PC-9 (cell line): ENCODE measurements at regions of chr7 and their contacts with region 1.

Region 1: DNA sequence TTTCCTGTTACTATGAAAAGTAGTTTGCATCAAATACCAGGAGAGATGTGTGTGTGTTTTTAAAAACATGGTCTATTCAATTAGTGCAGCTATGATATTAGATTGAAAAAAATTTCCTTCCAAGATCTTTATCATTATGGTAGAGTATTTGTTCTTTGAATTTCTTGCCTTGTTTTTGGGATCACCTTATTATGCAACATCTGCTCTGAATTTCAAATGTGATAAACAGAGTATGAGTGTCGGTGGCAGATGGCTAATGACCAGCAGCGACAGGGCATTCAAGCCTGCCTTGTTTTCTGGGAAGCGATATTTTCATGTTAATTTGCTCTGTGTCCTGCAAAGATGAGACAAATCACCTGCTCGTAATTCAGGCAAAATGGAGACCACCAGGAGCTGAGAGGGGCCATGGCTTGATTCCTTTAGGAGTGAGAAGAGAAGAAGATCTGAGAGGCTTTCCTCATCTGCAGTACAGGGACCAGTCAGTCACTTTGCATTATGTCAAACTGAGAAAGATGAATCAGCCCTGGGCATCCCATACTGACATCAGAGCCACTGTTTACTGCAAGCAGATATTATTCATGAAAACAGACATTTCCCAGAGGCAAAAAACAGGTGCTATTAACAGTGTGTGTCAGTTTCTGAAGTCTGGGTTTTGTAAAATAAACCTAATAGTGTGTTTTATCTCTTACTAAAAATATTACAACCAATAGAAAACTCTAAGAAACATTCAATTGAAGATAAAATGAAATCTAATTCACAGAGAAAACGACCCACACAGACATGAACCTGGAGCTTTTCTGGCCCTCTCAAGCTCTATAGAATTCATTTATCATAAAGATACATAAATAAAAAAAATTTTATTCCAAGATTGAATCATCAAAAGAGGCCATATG is 67.6 kb downstream of the CDK6 start:
- DNase-seq: no peak
- H3K4me3 ChIP-seq: no peak overlapping the region
- H3K27ac ChIP-seq: peak overlapping the region; percentile 7; the same call in 1 of the 2 replicates
- H3K4me1 ChIP-seq: peaks cover 56% of the 10 kb centered on the region
- H3K27me3 ChIP-seq: no peaks in the 10 kb centered on the region
- CTCF ChIP-seq: no peak

Region 2: GRCh38 chr7:92461027-92462003 is 307.4 kb before region 1 on chr7:
- CTCF ChIA-PET with region 1: no interaction called
- POLR2A ChIA-PET with region 1: no interaction called
- intact Hi-C with region 1: no loop called
- DNase-seq: peak in 1 of 2 experiments; percentile 29
- H3K4me3 ChIP-seq: no peak overlapping the region
- H3K27ac ChIP-seq: no peak overlapping the region
- H3K4me1 ChIP-seq: peaks cover 34% of the 10 kb centered on the region
- H3K27me3 ChIP-seq: no peaks in the 10 kb centered on the region
- CTCF ChIP-seq: peak; percentile 81

Region 3: GRCh38 chr7:92691578-92691977 is 77.2 kb before region 1 on chr7:
- CTCF ChIA-PET with region 1: no interaction called
- POLR2A ChIA-PET with region 1: no interaction called
- intact Hi-C with region 1: loop called (anchors 5 kb)
- DNase-seq: peak; percentile 8 to 66
- H3K4me3 ChIP-seq: no peak overlapping the region
- H3K27ac ChIP-seq: no peak overlapping the region
- H3K4me1 ChIP-seq: peaks cover 6% of the 10 kb centered on the region; the same call in 1 of the 2 replicates
- H3K27me3 ChIP-seq: no peaks in the 10 kb centered on the region
- CTCF ChIP-seq: peak; percentile 80

Region 4: GRCh38 chr7:92751902-92752901 is 16.5 kb before region 1 on chr7:
- CTCF ChIA-PET with region 1: interaction called, 3 read pairs
- POLR2A ChIA-PET with region 1: no interaction called
- intact Hi-C with region 1: loop called (anchors 1 kb)
- DNase-seq: peak in 1 of 2 experiments; percentile 85
- H3K4me3 ChIP-seq: no peak overlapping the region
- H3K27ac ChIP-seq: peak overlapping the region; percentile 76
- H3K4me1 ChIP-seq: peaks cover 28% of the 10 kb centered on the region
- H3K27me3 ChIP-seq: no peaks in the 10 kb centered on the region
- CTCF ChIP-seq: no peak

Region 5: GRCh38 chr7:92916674-92917224 is 148.0 kb after region 1 on chr7:
- CTCF ChIA-PET with region 1: no interaction called
- POLR2A ChIA-PET with region 1: interaction called, 4 read pairs
- intact Hi-C with region 1: loop called (anchors 2 kb)
- DNase-seq: peak; percentile 86 to 95
- H3K4me3 ChIP-seq: no peak overlapping the region
- H3K27ac ChIP-seq: peak overlapping the region; percentile 83
- H3K4me1 ChIP-seq: peaks cover 18% of the 10 kb centered on the region
- H3K27me3 ChIP-seq: no peaks in the 10 kb centered on the region
- CTCF ChIP-seq: no peak

Region 6: GRCh38 chr7:93117852-93118530 is 349.2 kb after region 1 on chr7 and contains the start of gene SAMD9:
- CTCF ChIA-PET with region 1: no interaction called
- POLR2A ChIA-PET with region 1: no interaction called
- intact Hi-C with region 1: loop called (anchors 10 kb)
- DNase-seq: peak; percentile 44 to 79
- H3K4me3 ChIP-seq: peak within 1 kb of the TSS; percentile 48; the same call in 1 of the 2 replicates
- H3K27ac ChIP-seq: peak within 1 kb of the TSS; percentile 95
- H3K4me1 ChIP-seq: peaks cover 57% of the 10 kb centered on the region
- H3K27me3 ChIP-seq: no peaks in the 10 kb centered on the region
- CTCF ChIP-seq: no peak
- total RNA-seq, gene SAMD9: 7.0 and 12.1 TPM in 2 replicates